ENCODE measurements at regions of chr16 and their contacts with region 1.

Region 1: GRCh38 chr16:74862741-74863244 is 88.2 kb upstream of the FA2H start:
- DNase-seq: peak in 4 of 5 donors; percentile 41 to 56 (median 46)
- H3K4me3 ChIP-seq: no peak overlapping the region
- H3K4me3 Mint-ChIP-seq: no peak overlapping the region
- H3K27ac ChIP-seq: no peak overlapping the region
- H3K27ac Mint-ChIP-seq: peak overlapping the region in 4 of 7 donors; percentile 57 to 77 (median 62)
- H3K4me1 ChIP-seq: peaks cover 7% of the 10 kb centered on the region
- H3K4me1 Mint-ChIP-seq: peaks cover 7 to 17% (median 11%) of the 10 kb centered on the region in 4 donors
- H3K27me3 ChIP-seq: no peaks in the 10 kb centered on the region
- H3K27me3 Mint-ChIP-seq: no peaks in the 10 kb centered on the region

Region 2: DNA sequence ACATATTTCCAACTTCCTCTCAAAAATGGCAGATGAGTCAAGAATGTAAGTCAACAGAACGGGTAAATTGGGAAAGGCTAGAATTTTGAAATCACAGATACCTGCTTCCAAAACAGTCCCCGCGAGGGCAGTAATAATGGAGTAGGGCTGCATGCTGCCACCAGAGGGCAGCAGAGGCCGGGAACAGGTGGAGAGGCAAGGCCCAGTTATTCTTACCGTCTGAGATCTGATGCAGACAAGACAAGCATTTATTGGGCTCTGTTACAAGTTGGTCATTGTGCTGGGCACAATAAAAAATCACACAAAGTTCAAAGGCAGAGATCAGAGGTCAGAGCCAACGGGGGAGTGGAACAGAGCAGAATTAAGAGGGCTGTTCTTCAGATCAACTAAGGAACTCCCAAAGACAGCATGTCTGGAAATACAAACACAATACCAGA is 153.3 kb before region 1 on chr16:
- CTCF ChIA-PET with region 1: interaction called, 83 read pairs
- POLR2A ChIA-PET with region 1: no interaction called
- intact Hi-C with region 1: loop called (anchors 1 kb)
- DNase-seq: peak; percentile 70 to 79 (median 78)
- H3K4me3 ChIP-seq: no peak overlapping the region
- H3K4me3 Mint-ChIP-seq: no peak overlapping the region
- H3K27ac ChIP-seq: no peak overlapping the region
- H3K27ac Mint-ChIP-seq: peak overlapping the region in 5 of 7 donors; percentile 44 to 93 (median 58)
- H3K4me1 ChIP-seq: no peaks in the 10 kb centered on the region
- H3K4me1 Mint-ChIP-seq: peaks cover 4 to 6% (median 6%) of the 10 kb centered on the region in 4 donors
- H3K27me3 ChIP-seq: no peaks in the 10 kb centered on the region
- H3K27me3 Mint-ChIP-seq: no peaks in the 10 kb centered on the region

Region 3: DNA sequence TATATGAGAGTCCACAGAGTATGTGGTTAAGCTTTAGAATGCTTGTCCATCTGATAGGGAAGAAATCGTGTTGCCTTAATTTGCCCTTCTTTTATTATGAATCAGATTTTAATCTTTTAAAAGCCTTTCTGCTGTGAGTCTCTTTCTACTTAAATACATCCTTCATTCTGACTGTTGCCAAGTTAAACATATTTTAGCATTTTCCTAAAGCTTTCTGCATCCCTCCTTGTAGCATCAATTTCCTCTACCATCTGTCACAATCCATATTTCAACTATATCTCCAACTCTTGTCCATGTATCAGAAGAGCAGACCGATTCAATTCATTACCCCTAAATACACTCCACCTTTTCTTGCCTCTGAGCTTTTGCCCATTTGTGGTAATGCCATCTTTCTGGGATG is 67.7 kb before region 1 on chr16:
- CTCF ChIA-PET with region 1: no interaction called
- POLR2A ChIA-PET with region 1: no interaction called
- intact Hi-C with region 1: no loop called
- DNase-seq: no peak
- H3K4me3 ChIP-seq: no peak overlapping the region
- H3K4me3 Mint-ChIP-seq: no peak overlapping the region
- H3K27ac ChIP-seq: no peak overlapping the region
- H3K27ac Mint-ChIP-seq: no peak overlapping the region
- H3K4me1 ChIP-seq: no peaks in the 10 kb centered on the region
- H3K4me1 Mint-ChIP-seq: no peaks in the 10 kb centered on the region
- H3K27me3 ChIP-seq: no peaks in the 10 kb centered on the region
- H3K27me3 Mint-ChIP-seq: peaks cover 18 to 33% of the 10 kb centered on the region in 2 donors

Region 4: GRCh38 chr16:74820942-74821341 is 41.9 kb before region 1 on chr16:
- CTCF ChIA-PET with region 1: interaction called, 89 read pairs
- POLR2A ChIA-PET with region 1: no interaction called
- intact Hi-C with region 1: no loop called
- DNase-seq: no peak
- H3K4me3 ChIP-seq: no peak overlapping the region
- H3K4me3 Mint-ChIP-seq: no peak overlapping the region
- H3K27ac ChIP-seq: no peak overlapping the region
- H3K27ac Mint-ChIP-seq: no peak overlapping the region
- H3K4me1 ChIP-seq: no peaks in the 10 kb centered on the region
- H3K4me1 Mint-ChIP-seq: no peaks in the 10 kb centered on the region
- H3K27me3 ChIP-seq: no peaks in the 10 kb centered on the region
- H3K27me3 Mint-ChIP-seq: peaks cover 10 to 21% of the 10 kb centered on the region in 2 donors

Region 5: DNA sequence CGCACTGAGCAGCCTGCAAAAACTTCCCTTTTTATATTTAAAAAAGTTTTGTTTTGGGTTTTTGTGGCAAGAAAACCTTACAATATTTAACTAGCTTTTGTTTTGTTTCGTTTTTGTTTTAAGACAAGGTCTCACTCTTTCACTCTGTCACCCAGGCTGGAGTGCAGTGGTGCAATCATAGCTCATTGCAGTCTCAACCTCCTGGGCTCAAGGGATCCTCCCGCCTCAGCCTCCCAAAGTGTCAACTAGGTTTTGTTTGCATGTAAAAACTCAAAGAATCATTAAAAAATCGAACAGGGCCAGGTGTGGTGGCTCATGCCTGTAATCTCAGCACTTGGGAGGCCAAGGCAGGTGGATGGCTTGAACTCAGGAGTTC is 10.3 kb before region 1 on chr16:
- CTCF ChIA-PET with region 1: interaction called, 19 read pairs
- POLR2A ChIA-PET with region 1: no interaction called
- intact Hi-C with region 1: no loop called
- DNase-seq: no peak
- H3K4me3 ChIP-seq: no peak overlapping the region
- H3K4me3 Mint-ChIP-seq: no peak overlapping the region
- H3K27ac ChIP-seq: no peak overlapping the region
- H3K27ac Mint-ChIP-seq: no peak overlapping the region
- H3K4me1 ChIP-seq: no peaks in the 10 kb centered on the region
- H3K4me1 Mint-ChIP-seq: no peaks in the 10 kb centered on the region
- H3K27me3 ChIP-seq: no peaks in the 10 kb centered on the region
- H3K27me3 Mint-ChIP-seq: peaks cover 2% of the 10 kb centered on the region in 2 donors

Region 6: GRCh38 chr16:74909366-74910064 is 46.7 kb after region 1 on chr16:
- CTCF ChIA-PET with region 1: interaction called, 10 read pairs
- POLR2A ChIA-PET with region 1: no interaction called
- intact Hi-C with region 1: no loop called
- DNase-seq: no peak
- H3K4me3 ChIP-seq: no peak overlapping the region
- H3K4me3 Mint-ChIP-seq: peak overlapping the region in 7 of 8 donors; percentile 17 to 72 (median 63)
- H3K27ac ChIP-seq: no peak overlapping the region
- H3K27ac Mint-ChIP-seq: peak overlapping the region in 1 of 7 donors; percentile 62
- H3K4me1 ChIP-seq: no peaks in the 10 kb centered on the region
- H3K4me1 Mint-ChIP-seq: peaks cover 0 to 2% (median 0%) of the 10 kb centered on the region in 4 donors
- H3K27me3 ChIP-seq: no peaks in the 10 kb centered on the region
- H3K27me3 Mint-ChIP-seq: no peaks in the 10 kb centered on the region